AG04449 (cell line): ENCODE measurements at regions of chr10 and their contacts with region 1.

Region 1: DNA sequence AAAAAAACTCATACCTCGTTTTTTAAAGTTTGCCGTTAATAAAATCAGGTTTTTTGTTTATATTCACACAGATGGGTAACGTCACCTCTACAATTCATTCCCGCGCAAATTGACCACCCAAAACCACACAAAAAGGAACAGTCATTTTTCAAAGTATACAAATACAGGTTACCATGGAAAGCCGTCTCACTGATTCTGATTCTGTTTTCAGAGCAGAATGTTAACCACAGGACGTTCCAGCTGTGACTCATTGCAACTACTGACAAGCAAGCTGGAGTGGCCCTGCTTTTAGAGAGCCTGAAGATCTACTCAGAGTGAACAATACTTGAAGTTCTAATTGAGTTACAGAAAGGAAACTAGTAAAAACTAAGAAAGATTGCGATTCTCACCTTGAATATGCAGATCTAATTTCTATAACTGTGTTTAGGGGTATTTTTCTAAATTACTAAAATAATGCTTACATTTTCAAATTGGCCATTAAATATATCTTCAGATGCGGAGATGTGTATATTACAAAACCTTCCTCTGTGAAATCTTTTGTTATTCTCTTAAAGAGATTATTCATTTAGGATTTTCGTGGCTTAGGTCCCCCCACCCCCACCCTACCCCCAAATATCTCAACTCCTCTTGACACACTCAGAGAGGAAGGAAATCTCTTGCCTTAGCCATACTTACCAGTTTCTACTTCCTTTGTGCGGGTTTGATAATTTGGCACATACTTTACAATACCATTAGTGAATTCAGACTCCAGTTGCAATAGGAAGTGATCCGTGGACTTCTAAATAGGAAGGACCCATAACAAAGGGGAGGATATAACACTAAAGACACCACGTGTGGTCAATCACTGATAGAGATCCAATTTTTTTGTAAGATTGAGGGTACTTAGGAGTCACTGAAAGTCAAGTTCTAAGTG is 106.0 kb downstream of the CUBN start:
- DNase-seq: peak; percentile 95
- H3K4me3 ChIP-seq: no peak overlapping the region
- CTCF ChIP-seq: no peak

Region 2: DNA sequence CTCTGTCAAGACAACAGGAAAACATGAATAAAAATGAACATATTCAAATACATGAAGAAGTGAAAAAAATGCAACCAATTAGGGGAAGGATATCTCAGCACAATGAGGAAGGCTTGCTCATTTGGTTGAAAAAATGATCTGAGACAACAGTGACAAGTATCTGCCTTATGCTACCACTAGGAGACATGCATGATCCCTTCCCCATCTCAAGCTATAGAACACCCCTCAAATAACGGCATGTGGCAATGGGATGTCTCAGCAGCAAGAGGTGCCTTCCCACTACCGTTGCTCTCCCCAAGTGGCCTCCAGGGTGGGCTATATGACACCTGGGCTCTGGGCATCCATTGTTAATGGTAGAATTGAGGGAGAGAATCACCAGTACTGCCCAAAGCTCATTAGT is 108.3 kb before region 1 on chr10:
- CTCF ChIA-PET with region 1: no interaction called
- POLR2A ChIA-PET with region 1: no interaction called
- DNase-seq: no peak
- H3K4me3 ChIP-seq: no peak overlapping the region
- CTCF ChIP-seq: no peak

Region 3: GRCh38 chr10:16995867-16996529 is 27.6 kb before region 1 on chr10:
- CTCF ChIA-PET with region 1: no interaction called
- POLR2A ChIA-PET with region 1: no interaction called
- DNase-seq: no peak
- H3K4me3 ChIP-seq: no peak overlapping the region
- CTCF ChIP-seq: no peak

Region 4: GRCh38 chr10:17009212-17009700 is 14.4 kb before region 1 on chr10:
- CTCF ChIA-PET with region 1: interaction called, 20 read pairs
- POLR2A ChIA-PET with region 1: interaction called, 4 read pairs
- DNase-seq: no peak
- H3K4me3 ChIP-seq: no peak overlapping the region
- CTCF ChIP-seq: no peak